ENCODE measurements at regions of chr11 and their contacts with region 1.

Region 1: DNA sequence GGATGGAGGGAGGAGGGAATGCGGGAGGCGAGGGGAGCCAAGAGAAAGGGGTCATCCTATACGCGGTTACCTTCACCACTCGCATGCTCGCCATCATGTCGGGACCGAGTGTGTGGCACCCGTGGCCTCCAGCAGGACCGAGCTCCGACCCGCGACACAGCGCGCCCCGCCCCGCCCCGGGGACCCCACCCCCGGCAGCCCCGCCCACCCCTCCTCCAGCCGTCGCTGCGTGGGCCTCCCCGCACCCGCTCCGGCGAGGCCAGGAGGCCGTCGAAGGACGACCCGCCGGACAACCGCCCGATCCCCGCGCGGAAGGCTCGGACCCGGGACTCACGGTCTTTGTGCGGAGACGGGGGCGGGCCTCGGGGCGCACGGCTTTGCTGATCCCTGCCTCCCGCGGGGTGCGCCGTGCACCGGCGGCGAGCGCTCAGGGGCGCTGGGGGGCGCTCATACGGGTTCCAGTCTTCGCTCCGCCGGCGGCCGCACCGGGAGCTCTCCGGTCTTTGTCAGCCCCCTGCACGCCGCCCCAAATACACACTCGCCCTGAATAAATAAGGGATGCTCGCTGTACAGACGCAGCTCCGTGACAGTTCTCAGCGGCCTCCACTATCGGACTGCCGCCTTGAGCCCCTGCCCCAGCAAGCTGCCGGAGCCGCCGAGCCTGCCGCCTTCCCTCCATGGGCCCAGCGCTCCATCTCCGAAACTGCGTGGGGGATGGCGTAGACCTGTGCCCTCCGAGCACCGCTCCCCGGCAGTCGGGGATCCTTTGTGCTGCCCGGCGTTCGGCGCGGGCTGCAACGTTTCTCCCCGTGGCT is at the start of gene UBE2L6:
- DNase-seq: peak; percentile 56 to 90 (median 79)
- H3K4me3 ChIP-seq: peak within 1 kb of the TSS; percentile 92
- H3K4me3 Mint-ChIP-seq: peak within 1 kb of the TSS; percentile 95 to 100 (median 100)
- H3K27ac ChIP-seq: peak within 1 kb of the TSS; percentile 86
- H3K27ac Mint-ChIP-seq: peak within 1 kb of the TSS; percentile 88 to 100 (median 98)
- H3K4me1 ChIP-seq: peaks cover 25% of the 10 kb centered on the region
- H3K4me1 Mint-ChIP-seq: peaks cover 41 to 51% (median 46%) of the 10 kb centered on the region in 3 donors
- H3K27me3 ChIP-seq: no peaks in the 10 kb centered on the region
- H3K27me3 Mint-ChIP-seq: no peaks in the 10 kb centered on the region
- total RNA-seq, gene UBE2L6: 74.9 to 79.2 TPM

Region 2: DNA sequence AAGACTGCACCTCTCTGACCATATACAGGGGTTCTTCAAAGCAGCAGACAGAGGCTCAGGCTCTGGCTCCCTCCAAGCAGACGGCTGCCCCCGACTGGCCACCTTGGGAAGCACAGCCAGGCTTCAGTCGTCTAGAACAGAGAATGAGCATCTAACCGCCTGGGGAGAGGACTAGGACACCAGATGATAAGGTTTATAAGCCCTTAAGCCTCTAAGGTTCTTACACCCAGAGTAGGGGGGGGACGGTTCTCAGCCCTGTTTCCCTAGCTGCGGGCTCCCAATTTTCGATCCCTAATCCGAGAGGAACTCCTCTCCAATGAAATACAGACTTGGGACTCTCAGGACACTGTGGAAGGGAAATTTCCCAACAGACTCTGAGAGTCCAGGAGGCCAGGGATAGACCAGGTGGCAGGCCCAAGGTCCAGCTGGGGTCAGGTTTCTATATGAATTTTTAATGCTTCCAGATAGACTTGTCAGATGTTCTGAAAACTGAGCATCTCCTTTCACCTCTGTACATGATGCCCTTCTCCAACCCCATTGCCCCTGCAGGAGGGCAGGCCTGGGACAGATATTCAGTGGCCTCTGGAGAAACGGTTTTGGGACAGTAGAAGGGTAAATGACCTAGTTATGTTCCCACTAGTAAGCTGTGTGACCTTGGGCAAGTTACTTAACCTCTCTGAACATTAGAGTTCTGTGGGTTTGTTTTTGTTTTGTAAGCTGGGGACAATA is 87.1 kb before region 1 on chr11:
- CTCF ChIA-PET with region 1: interaction called, 12 read pairs
- POLR2A ChIA-PET with region 1: no interaction called
- DNase-seq: peak in 4 of 5 donors; percentile 34 to 71 (median 45)
- H3K4me3 ChIP-seq: no peak overlapping the region
- H3K4me3 Mint-ChIP-seq: peak overlapping the region in 2 of 7 donors; percentile 4 to 8
- H3K27ac ChIP-seq: no peak overlapping the region
- H3K27ac Mint-ChIP-seq: peak overlapping the region in 3 of 8 donors; percentile 2 to 50 (median 3)
- H3K4me1 ChIP-seq: peaks cover 7% of the 10 kb centered on the region
- H3K4me1 Mint-ChIP-seq: peaks cover 10 to 37% (median 16%) of the 10 kb centered on the region in 3 donors
- H3K27me3 ChIP-seq: no peaks in the 10 kb centered on the region
- H3K27me3 Mint-ChIP-seq: peaks cover 11 to 13% of the 10 kb centered on the region in 2 donors

Region 3: GRCh38 chr11:57530596-57531507 is 36.9 kb before region 1 on chr11 and contains the start of gene TIMM10:
- CTCF ChIA-PET with region 1: interaction called, 15 read pairs
- POLR2A ChIA-PET with region 1: interaction called, 6 read pairs
- DNase-seq: peak; percentile 84 to 97 (median 95)
- H3K4me3 ChIP-seq: peak within 1 kb of the TSS; percentile 88
- H3K4me3 Mint-ChIP-seq: peak within 1 kb of the TSS; percentile 85 to 96 (median 90)
- H3K27ac ChIP-seq: peak within 1 kb of the TSS; percentile 86
- H3K27ac Mint-ChIP-seq: peak within 1 kb of the TSS; percentile 89 to 99 (median 97)
- H3K4me1 ChIP-seq: peaks cover 19% of the 10 kb centered on the region
- H3K4me1 Mint-ChIP-seq: peaks cover 26 to 41% (median 35%) of the 10 kb centered on the region in 3 donors
- H3K27me3 ChIP-seq: no peaks in the 10 kb centered on the region
- H3K27me3 Mint-ChIP-seq: peaks cover 0 to 3% of the 10 kb centered on the region in 2 donors
- total RNA-seq, gene TIMM10: 151 to 154 TPM

Region 4: DNA sequence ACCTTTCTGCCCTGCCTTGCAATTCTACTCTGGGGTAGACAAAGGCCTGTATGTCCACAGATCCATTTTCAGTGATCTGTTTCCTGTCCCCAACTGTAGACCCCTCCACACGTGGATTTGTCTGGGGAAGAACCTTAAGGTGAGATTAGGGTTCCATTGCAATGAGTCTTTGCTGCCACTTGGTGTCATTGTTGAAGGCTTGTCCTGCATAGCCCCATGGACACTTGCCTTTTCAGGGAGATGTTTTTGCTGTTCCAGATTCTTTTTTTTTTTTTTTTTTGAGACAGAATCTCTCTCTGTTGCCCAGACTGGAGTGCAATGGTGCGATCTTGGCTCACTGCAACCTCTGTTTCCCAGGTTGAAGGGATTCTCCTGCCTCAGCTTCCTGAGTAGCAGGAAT is 51.6 kb after region 1 on chr11:
- CTCF ChIA-PET with region 1: no interaction called
- POLR2A ChIA-PET with region 1: no interaction called
- DNase-seq: no peak
- H3K4me3 ChIP-seq: no peak overlapping the region
- H3K4me3 Mint-ChIP-seq: no peak overlapping the region
- H3K27ac ChIP-seq: no peak overlapping the region
- H3K27ac Mint-ChIP-seq: no peak overlapping the region
- H3K4me1 ChIP-seq: no peaks in the 10 kb centered on the region
- H3K4me1 Mint-ChIP-seq: no peaks in the 10 kb centered on the region
- H3K27me3 ChIP-seq: no peaks in the 10 kb centered on the region
- H3K27me3 Mint-ChIP-seq: peaks cover 23 to 26% of the 10 kb centered on the region in 2 donors

Region 5: DNA sequence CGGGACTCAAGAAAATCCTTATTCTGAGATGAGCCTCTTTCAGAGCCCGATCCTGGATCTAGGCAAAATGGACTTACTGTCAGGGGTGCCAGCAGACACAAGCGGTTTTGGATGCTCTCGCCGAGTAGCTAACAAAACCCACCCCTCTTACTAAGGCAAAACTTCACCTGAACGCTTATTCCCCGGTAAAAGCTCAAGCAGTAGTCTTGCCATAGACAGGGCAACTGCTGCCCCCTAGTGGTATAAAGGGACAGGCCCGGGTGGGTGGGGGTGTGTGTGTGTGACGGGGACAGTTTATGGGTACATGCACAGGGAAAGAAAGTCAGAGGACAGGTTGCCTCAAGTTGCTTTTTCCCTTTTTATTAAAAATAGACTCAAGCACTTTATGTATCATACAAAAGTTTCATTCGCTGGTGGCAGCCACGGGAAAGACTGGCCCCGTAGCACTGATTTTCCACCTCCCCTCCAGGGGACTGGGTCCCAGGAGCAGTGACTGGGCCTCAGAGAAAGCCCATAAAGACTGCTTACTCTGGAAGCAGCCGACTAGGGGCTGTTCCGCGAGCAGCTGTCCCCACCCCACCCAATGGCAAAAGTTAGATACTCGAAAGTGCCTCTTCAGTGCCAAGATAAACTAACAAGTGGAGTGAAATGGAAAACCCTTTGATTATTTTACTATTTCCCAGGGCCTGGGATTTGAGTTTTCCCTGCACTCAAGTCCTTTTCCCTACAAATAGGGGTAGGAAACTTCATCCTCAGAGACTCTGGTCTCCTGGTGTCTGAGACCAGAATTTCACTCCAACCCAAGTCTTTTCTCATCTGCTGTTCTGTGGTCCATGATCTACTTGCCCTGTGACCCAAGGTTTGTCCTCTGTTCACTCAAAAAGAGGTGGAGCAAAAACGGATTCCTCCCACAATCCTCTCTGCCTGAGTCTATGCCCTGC is 77.3 kb after region 1 on chr11:
- CTCF ChIA-PET with region 1: interaction called, 144 read pairs
- POLR2A ChIA-PET with region 1: interaction called, 4 read pairs
- DNase-seq: peak; percentile 74 to 89 (median 78)
- H3K4me3 ChIP-seq: no peak overlapping the region
- H3K4me3 Mint-ChIP-seq: peak overlapping the region in 1 of 7 donors; percentile 53
- H3K27ac ChIP-seq: no peak overlapping the region
- H3K27ac Mint-ChIP-seq: peak overlapping the region in 3 of 8 donors; percentile 31 to 61 (median 54)
- H3K4me1 ChIP-seq: peaks cover 12% of the 10 kb centered on the region
- H3K4me1 Mint-ChIP-seq: peaks cover 20 to 42% (median 25%) of the 10 kb centered on the region in 3 donors
- H3K27me3 ChIP-seq: peaks cover 34% of the 10 kb centered on the region
- H3K27me3 Mint-ChIP-seq: peaks cover 38 to 54% of the 10 kb centered on the region in 2 donors

Region 6: GRCh38 chr11:57657194-57658022 is 89.7 kb after region 1 on chr11 and contains the start of gene CLP1:
- CTCF ChIA-PET with region 1: interaction called, 10 read pairs
- POLR2A ChIA-PET with region 1: no interaction called
- DNase-seq: peak; percentile 98 to 99 (median 99)
- H3K4me3 ChIP-seq: peak within 1 kb of the TSS; percentile 95
- H3K4me3 Mint-ChIP-seq: peak within 1 kb of the TSS; percentile 92 to 98 (median 96)
- H3K27ac ChIP-seq: peak within 1 kb of the TSS; percentile 92
- H3K27ac Mint-ChIP-seq: peak within 1 kb of the TSS; percentile 91 to 99 (median 98)
- H3K4me1 ChIP-seq: peaks cover 13% of the 10 kb centered on the region
- H3K4me1 Mint-ChIP-seq: peaks cover 27 to 52% (median 43%) of the 10 kb centered on the region in 3 donors
- H3K27me3 ChIP-seq: no peaks in the 10 kb centered on the region
- H3K27me3 Mint-ChIP-seq: no peaks in the 10 kb centered on the region
- total RNA-seq, gene CLP1: 22.4 to 23.4 TPM